Lower leg skin (tissue), 4 donors: ENCODE measurements at regions of chr16 and their contacts with region 1.

Region 1: DNA sequence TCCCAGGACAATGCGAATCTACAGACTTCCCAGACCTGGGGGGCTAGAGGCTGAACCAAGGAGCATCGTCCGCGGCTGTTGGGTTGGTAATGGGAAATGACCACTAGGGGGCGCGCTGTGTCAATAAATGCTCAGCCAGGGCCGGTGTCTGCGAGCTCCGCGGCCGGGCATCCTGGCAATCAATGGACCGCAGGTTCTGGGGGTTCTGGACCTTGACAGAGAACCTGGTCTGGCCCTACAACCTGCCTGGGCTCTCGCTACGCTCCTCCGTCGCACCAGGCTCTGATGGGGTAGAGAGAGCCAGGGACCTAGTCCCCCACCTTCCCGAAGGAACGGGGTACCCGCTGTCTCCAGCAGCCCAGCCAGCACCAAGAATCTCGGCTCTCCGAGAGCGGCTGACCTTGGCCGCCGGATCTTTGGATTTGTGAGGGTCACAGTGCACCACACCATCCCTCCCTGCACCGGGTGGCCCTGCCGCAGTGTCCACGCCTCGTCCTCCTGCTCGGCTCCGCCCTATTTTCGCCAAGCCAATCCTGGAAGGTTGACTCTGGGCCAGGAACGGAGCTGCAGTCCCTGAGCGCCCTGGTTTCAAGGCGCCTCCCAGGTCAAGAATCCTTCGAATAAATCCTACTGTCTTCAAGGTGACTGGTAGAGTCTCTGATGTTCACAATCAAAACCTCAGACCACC is 20.4 kb upstream of the BEAN1 start:
- DNase-seq: peak; percentile 78 to 97
- H3K4me3 ChIP-seq: no peak overlapping the region
- CTCF ChIP-seq: peak in 1 of 3 donors; percentile 86
- POLR2A ChIP-seq: no peak

Region 2: GRCh38 chr16:66471716-66472393 is 65.2 kb after region 1 on chr16:
- intact Hi-C with region 1: no loop called
- DNase-seq: peak in 1 of 2 donors; percentile 67
- H3K4me3 ChIP-seq: no peak overlapping the region
- CTCF ChIP-seq: no peak
- POLR2A ChIP-seq: no peak

Region 3: DNA sequence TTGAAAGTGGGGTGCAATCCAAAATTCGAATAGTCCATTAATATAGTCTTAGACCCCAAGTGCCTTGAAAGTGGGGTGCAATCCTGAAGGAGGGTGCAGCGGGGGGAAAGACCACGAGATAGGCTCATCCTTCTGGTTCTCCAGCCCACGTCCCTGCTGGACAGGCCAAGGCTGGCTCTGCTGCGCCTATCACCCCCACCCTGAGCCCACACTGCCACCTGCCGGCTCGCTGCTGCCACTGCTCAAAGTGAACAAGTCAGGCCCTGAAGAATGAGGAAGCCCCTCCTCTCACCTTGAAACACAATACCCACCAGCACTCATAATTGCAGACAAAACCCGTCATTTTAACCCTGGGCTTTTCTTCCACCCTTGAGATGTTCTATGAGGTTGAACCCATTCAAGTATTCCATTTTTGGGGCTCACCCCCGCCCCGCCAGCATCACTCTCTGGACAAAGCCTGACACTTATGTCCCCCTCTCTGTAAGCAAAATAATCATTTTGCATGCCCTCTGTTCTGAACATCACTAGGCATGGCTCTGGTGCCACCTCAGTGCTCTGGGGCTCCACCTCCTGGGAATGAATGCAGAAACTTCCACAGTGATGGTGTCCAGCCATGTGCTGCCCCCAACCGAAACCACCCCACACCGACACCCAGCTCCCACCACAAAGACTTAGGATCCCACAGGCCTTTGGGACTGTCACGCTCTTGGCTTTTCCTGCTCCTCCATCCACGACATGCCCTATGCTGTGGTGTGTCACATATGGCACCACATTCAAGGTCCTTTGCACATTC is 77.2 kb after region 1 on chr16:
- intact Hi-C with region 1: loop called (anchors 5 kb)
- DNase-seq: peak; percentile 67 to 95
- H3K4me3 ChIP-seq: no peak overlapping the region
- CTCF ChIP-seq: peak in 1 of 3 donors; percentile 53
- POLR2A ChIP-seq: no peak

Region 4: GRCh38 chr16:66569827-66570405 is 163.2 kb after region 1 on chr16:
- intact Hi-C with region 1: no loop called
- DNase-seq: no peak
- H3K4me3 ChIP-seq: no peak overlapping the region
- CTCF ChIP-seq: no peak
- POLR2A ChIP-seq: no peak

Region 5: DNA sequence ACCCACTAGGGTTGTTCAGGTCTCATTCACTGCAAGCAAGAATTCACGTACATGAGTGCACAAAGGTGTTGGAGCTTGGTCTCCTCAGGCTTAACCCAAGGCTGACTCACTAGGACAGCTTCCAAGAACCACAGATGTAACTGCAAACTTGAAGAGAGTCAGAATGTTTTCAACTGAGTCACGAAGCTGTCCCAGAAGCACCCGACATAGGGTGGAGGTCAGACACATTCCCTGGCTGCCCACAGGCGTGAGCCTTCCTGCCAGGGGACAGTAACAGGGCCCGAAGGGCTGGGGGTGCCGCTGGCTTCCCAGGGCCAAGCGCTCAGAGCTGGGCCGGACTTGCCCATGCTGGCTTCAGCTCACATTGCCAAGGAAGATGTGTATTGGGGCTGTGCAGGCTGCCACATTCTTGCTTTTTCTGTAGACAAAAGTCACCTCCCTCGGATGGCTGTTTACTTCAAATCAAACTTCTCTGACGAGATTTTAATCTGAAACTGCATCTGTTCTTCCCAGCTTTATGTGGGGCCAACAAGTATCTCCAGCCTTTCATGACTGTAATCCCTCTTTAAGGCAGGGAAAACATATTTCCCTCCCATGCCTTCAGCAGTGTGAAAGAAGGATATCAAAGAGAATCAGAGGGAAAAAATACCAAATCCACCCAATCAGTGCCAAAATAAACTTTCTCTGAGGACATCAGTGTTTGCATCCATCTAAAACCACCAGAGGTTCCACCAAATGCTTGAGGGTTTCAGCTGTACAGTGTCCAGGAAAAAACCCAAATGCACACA is 212.1 kb after region 1 on chr16:
- intact Hi-C with region 1: loop called (anchors 10 kb)
- DNase-seq: no peak
- H3K4me3 ChIP-seq: no peak overlapping the region
- CTCF ChIP-seq: no peak
- POLR2A ChIP-seq: no peak

Region 6: DNA sequence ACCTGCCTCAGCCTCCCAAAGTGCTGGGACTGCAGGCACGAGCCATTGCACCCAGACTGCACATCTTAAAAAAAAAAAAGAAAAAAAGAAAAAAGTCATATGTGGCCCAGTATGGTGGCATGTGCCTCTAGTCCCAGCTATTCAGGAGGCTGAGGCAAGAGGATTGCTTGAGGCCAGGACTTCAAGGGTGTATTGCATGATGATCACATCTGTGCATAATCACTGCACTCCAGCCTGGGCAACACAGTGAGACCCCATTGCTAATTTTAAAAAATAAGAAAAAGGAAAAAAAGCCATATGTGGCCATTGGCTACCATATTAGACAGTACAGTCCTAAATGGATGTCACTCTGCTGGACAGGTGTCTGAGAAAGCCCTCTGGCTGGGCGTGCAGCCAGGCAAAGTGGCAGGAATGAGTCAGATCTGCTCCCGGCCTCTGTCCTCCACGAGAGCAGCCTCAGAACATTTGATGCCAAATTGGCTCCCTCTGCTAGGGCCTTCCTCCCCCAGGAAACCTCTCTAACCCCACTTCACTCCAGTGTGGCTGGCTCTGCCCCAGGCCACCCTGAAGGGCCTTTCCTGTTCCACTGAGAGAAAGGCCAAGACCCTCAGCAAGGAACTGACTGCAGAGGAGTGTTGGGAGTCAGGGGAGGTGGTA is 452.2 kb after region 1 on chr16:
- intact Hi-C with region 1: loop called (anchors 10 kb)
- DNase-seq: no peak
- H3K4me3 ChIP-seq: no peak overlapping the region
- CTCF ChIP-seq: no peak
- POLR2A ChIP-seq: no peak